Activated naive CD4-positive, alpha-beta T cell treated with anti-CD3 and anti-CD28 coated beads for 36 hours (primary cell): ENCODE measurements at regions of chr2 and their contacts with region 1.

Region 1: DNA sequence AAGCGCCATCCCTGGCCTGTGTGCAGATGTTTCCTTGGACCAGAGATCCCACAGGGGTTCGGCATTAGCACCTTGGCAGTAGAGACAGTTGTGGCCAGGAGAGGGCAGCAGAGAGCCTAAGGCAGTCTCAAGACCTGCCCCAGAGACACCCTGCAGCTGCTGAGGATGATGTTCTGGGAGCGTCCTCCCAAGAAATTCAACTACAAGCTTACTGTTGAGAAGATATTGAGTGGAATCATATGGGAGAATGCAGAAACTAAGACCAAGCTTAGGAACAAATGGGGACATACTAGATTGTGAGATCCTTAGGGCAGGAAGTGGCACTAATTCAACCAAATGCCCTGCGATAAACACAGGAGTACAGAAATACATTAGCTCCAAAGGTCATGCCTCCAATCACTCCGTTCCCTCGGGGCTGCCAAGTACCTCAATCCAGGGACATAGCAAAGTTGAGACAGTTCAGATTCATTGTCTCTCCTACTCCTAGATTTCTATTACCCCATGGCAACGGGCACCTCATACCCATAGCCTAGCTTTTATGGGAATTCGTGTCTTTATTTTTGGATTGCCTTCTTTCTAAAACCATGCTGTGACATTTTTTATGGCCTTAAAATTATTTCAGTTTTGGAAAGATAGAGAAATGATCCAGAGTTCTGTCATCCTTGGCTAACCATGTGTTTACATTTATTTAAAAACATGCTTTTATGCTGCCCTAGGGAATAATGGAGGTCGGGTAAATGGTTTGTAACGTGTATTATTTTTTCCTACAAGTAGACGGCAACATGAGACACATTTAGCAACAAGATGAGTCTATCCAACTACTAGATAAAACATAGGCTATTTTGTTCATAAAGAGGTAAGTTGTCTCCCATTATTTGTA is 2.2 kb upstream of the ERMN start:
- DNase-seq: peak; percentile 95
- H3K4me3 Mint-ChIP-seq: peak overlapping the region; percentile 52
- H3K27ac Mint-ChIP-seq: peak overlapping the region; percentile 82
- H3K4me1 Mint-ChIP-seq: peaks cover 63% of the 10 kb centered on the region
- H3K27me3 Mint-ChIP-seq: no peaks in the 10 kb centered on the region

Region 2: DNA sequence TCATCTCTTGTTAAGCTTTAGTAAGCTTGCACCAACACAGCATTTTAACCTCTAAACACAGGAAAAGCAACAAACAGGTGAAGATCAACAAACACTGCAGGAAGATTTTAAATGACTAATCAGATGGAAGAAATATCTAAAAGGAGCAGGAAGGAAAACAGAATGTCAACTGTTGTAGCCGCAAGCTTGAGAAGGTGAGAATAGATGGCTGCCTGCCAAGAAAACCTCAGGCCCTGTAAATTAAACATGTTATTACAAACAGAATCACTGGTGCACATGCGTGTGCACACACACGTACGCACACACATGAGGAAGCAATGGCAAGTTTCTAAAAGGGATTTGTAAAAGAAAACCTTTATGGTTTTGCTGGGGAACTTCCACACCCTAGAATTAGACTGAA is 328.2 kb before region 1 on chr2:
- CTCF ChIA-PET with region 1: no interaction called
- intact Hi-C with region 1: no loop called
- DNase-seq: no peak
- H3K4me3 Mint-ChIP-seq: no peak overlapping the region
- H3K27ac Mint-ChIP-seq: no peak overlapping the region
- H3K4me1 Mint-ChIP-seq: no peaks in the 10 kb centered on the region
- H3K27me3 Mint-ChIP-seq: no peaks in the 10 kb centered on the region

Region 3: GRCh38 chr2:157256626-157257025 is 71.2 kb before region 1 on chr2:
- CTCF ChIA-PET with region 1: no interaction called
- intact Hi-C with region 1: no loop called
- DNase-seq: peak; percentile 44
- H3K4me3 Mint-ChIP-seq: no peak overlapping the region
- H3K27ac Mint-ChIP-seq: no peak overlapping the region
- H3K4me1 Mint-ChIP-seq: peaks cover 27% of the 10 kb centered on the region
- H3K27me3 Mint-ChIP-seq: peaks cover 13% of the 10 kb centered on the region

Region 4: GRCh38 chr2:157312866-157313486 is 14.9 kb before region 1 on chr2:
- CTCF ChIA-PET with region 1: interaction called, 263 read pairs
- intact Hi-C with region 1: loop called (anchors 1 kb)
- DNase-seq: peak; percentile 17
- H3K4me3 Mint-ChIP-seq: no peak overlapping the region
- H3K27ac Mint-ChIP-seq: peak overlapping the region; percentile 41
- H3K4me1 Mint-ChIP-seq: peaks cover 49% of the 10 kb centered on the region
- H3K27me3 Mint-ChIP-seq: no peaks in the 10 kb centered on the region

Region 5: DNA sequence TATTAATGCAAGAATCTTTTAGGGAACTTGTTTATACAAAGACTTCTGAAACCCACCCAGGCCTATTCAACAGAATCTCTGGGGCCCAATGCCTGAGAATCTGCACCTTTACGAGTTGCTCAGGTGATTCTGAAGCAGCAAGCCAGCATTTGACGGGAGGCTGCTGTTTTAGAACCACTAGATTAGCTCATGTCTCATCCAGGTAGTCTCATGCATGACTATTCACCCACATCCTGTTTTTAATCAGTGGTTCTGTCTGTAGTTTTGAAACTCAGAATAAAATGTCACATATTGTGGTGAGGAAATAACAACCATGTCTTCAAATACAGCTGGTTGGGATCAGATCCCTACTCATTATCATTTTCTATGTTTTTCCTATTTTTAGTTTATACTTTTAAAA is 76.5 kb after region 1 on chr2:
- CTCF ChIA-PET with region 1: interaction called, 32 read pairs
- intact Hi-C with region 1: loop called (anchors 1 kb)
- DNase-seq: peak; percentile 80
- H3K4me3 Mint-ChIP-seq: no peak overlapping the region
- H3K27ac Mint-ChIP-seq: peak overlapping the region; percentile 72
- H3K4me1 Mint-ChIP-seq: peaks cover 76% of the 10 kb centered on the region
- H3K27me3 Mint-ChIP-seq: no peaks in the 10 kb centered on the region

Region 6: DNA sequence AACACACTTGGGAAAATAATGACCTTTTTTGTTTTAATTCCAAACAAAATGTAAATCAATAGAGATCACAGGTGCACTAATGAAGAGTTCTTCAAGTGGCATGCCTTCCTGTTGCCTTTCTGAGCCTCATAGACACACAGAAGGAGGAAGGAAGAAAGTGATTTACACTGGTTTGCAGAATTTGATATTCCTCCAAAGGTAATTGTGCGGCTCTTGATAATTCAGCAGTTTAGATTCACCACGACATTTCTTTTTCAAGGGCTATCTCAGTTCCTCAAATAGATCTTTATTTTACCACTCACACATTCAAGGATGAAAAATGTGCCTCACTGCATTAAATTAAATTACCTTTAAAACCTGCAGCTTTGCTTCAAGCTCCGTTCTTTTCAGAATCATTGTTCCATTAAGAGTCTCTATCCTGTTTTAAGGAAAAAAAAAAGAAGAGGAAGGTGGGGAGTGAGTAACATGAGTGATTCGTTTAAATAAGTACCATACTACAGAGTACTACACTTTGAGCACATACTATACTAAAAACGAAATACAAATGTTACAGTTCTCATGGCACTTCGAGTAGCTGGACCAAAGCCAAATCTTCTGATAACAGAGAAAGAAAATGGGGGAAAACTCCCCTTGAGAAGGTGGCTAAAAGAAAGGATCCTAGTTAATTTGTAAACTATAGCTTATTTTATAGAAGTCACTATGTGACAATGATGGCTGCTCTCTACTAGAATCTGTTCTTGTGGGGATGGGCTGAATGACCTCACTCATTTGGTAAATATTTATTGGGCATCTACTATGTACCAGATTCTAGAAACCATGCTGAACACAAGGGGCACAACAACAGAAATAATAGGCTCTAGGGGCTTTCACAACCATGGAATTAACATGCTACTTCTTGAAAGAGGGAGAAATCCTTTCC is 99.4 kb after region 1 on chr2:
- CTCF ChIA-PET with region 1: interaction called, 40 read pairs
- intact Hi-C with region 1: no loop called
- DNase-seq: no peak
- H3K4me3 Mint-ChIP-seq: peak overlapping the region; percentile 52
- H3K27ac Mint-ChIP-seq: peak overlapping the region; percentile 100
- H3K4me1 Mint-ChIP-seq: peaks cover 84% of the 10 kb centered on the region
- H3K27me3 Mint-ChIP-seq: no peaks in the 10 kb centered on the region

Region 7: DNA sequence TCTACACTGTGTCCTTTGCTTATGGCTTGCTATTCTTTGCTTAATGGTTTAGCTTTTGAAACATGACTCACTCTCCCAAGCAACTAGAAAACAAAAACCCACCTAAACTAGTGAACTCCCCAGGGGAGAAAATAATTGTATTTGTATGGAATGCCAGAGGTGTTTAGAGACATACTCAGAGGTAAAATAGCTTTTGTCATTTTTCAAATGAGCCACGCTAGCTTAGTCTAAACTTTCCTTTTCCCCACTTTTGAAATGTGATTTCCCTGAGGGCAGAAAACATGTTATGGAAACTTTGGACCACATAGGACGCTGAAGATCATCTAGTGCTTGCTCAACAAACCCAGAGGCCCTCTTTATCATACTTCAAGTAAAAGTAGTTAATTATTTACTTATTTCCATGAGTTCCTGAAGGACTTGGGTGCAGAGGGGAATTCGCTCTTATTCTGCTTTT is 132.6 kb after region 1 on chr2:
- CTCF ChIA-PET with region 1: interaction called, 15 read pairs
- intact Hi-C with region 1: loop called (anchors 1 kb)
- DNase-seq: no peak
- H3K4me3 Mint-ChIP-seq: peak overlapping the region; percentile 45
- H3K27ac Mint-ChIP-seq: peak overlapping the region; percentile 99
- H3K4me1 Mint-ChIP-seq: peaks cover 92% of the 10 kb centered on the region
- H3K27me3 Mint-ChIP-seq: no peaks in the 10 kb centered on the region

Region 8: GRCh38 chr2:157486596-157487270 is 158.9 kb after region 1 on chr2:
- CTCF ChIA-PET with region 1: interaction called, 60 read pairs
- intact Hi-C with region 1: no loop called
- DNase-seq: no peak
- H3K4me3 Mint-ChIP-seq: peak overlapping the region; percentile 68
- H3K27ac Mint-ChIP-seq: peak overlapping the region; percentile 87
- H3K4me1 Mint-ChIP-seq: peaks cover 86% of the 10 kb centered on the region
- H3K27me3 Mint-ChIP-seq: no peaks in the 10 kb centered on the region

Region 9: DNA sequence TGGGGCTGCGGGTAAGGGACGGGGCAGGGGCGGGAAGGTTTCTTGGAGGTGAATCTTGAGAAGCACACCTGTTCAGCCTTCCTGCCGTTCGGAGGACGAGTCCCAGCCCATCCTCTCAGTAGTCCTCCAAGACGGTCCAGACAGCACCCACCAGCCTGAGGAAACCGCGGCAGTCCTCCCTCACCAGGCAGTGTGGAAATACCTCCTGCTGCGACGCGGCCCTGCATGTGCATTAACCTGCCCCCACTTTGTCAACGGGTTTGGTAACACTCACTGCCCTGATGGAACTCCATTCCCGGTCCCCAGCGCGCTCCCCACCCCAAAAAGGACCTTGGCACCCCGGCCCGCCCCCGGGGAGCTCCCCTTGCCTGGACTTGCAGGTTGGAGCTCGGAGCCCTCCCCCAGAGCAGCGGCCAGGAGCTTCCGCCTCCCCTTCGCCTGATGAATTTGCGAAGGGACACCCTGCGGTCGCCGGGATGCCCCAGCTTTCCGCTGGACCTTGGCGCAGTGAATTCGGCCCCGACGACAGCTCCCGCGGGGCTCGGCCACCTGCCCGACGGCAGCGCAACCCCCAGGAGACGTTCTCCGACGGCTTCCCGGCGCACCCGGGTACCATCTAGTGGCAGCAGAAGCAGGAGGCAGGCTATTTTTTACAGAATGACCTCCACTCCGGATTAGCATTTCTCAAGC is 269.3 kb after region 1 on chr2:
- CTCF ChIA-PET with region 1: interaction called, 6 read pairs
- intact Hi-C with region 1: loop called (anchors 1 kb)
- DNase-seq: peak; percentile 78
- H3K4me3 Mint-ChIP-seq: peak overlapping the region; percentile 71
- H3K27ac Mint-ChIP-seq: no peak overlapping the region
- H3K4me1 Mint-ChIP-seq: peaks cover 18% of the 10 kb centered on the region
- H3K27me3 Mint-ChIP-seq: no peaks in the 10 kb centered on the region